Ascending aorta (tissue), 2 donors: ENCODE measurements at regions of chr19 and their contacts with region 1.

Region 1: DNA sequence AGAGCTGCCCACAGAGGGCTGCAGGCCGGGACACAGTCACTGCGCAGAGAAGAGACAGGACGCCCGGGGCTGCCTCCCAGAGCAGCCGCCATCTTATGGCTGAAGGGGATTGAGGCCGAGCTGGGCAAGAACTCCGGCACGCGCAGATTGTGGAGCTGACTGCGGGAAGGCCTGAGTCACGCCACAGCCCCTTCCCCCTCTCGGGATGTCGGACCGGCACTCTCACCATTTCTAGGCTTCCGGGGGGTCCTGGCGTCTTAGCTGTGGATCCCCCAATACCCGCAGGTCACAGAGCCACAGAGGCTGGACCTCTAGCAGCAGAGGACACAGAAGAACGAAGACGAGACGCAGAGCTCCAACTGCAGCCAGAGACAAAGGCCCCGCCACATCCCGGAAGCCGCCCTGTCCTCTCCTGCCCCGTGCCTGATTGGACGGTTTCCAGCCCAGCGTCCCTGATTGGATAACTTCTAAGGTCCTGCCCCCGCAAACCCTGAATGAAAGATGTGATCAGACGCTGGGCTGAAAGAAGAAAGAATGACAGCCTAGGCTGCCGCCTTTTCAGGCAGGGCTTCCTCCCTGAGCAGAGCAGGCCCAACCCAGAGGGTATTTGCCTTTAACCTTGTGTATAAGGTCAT is at the start of gene ZNF43:
- DNase-seq: peak; percentile 93 to 98
- H3K4me3 ChIP-seq: peak within 1 kb of the TSS; percentile 88 to 91
- H3K27ac ChIP-seq: peak within 1 kb of the TSS; percentile 77 to 91
- H3K4me1 ChIP-seq: peaks cover 3 to 7% of the 10 kb centered on the region in 2 donors
- H3K27me3 ChIP-seq: no peaks in the 10 kb centered on the region
- CTCF ChIP-seq: no peak
- total RNA-seq, gene ZNF43: 8.4 TPM

Region 2: GRCh38 chr19:21767065-21767800 is 68.7 kb before region 1 on chr19 and contains the start of gene ZNF100:
- intact Hi-C with region 1: loop called (anchors 1 kb)
- DNase-seq: peak; percentile 76 to 96
- H3K4me3 ChIP-seq: peak within 1 kb of the TSS; percentile 59 to 86
- H3K27ac ChIP-seq: peak within 1 kb of the TSS; percentile 88 to 89
- H3K4me1 ChIP-seq: peaks cover 0 to 3% of the 10 kb centered on the region in 2 donors
- H3K27me3 ChIP-seq: no peaks in the 10 kb centered on the region
- CTCF ChIP-seq: no peak
- total RNA-seq, gene ZNF100: 4.2 TPM

Region 3: GRCh38 chr19:21900372-21900771 is 64.4 kb after region 1 on chr19:
- intact Hi-C with region 1: no loop called
- DNase-seq: no peak
- H3K4me3 ChIP-seq: no peak overlapping the region
- H3K27ac ChIP-seq: no peak overlapping the region
- H3K4me1 ChIP-seq: no peaks in the 10 kb centered on the region
- H3K27me3 ChIP-seq: no peaks in the 10 kb centered on the region
- CTCF ChIP-seq: no peak